Activated CD8-positive, alpha-beta T cell treated with anti-CD3 and anti-CD28 coated beads for 36 hours (primary cell): ENCODE measurements at regions of chr12 and their contacts with region 1.

Region 1: DNA sequence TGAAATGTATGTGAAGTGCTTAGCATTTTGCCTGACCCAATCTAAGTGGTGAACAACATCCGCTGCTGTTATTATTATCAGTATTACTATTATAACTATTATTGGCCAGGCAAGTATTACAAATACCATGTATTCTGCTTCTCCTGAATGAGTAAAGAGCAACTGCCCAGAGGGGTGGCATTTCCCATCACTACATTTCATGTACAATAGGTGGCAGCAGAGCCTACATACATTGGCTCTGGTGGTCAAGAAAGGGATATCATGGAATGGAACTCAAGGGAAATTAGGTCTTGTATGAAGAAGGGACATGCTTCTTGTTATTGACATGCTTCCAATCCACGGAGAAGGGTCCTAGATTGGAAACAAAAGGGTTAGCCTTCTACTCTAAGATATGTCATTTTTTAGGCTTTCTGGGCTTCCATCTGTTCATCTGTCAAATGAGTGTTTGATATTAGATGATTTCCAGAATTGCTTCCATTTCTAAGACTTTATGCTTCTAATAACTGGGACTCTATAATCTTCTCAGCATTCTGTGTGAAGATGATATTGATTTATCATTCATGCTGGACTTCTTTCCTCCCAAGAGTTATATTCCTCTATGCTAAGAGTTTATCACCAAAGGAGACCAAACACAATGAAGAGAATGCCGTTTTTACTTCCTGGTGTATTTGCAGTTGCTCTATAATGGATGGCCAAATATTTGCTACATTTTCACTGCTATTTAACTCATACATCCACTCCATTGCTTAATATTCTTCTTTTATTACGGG is 239.1 kb downstream of the SSPN start:
- DNase-seq: peak; percentile 26
- ATAC-seq: peak; percentile 61
- H3K4me3 Mint-ChIP-seq: no peak overlapping the region
- H3K27ac Mint-ChIP-seq: no peak overlapping the region
- H3K4me1 Mint-ChIP-seq: no peaks in the 10 kb centered on the region
- H3K27me3 Mint-ChIP-seq: no peaks in the 10 kb centered on the region
- CTCF ChIP-seq: peak; percentile 64

Region 2: GRCh38 chr12:26340649-26341048 is 93.8 kb before region 1 on chr12:
- CTCF ChIA-PET with region 1: no interaction called
- POLR2A ChIA-PET with region 1: no interaction called
- intact Hi-C with region 1: no loop called
- DNase-seq: no peak
- ATAC-seq: peak; percentile 37
- H3K4me3 Mint-ChIP-seq: no peak overlapping the region
- H3K27ac Mint-ChIP-seq: no peak overlapping the region
- H3K4me1 Mint-ChIP-seq: peaks cover 12% of the 10 kb centered on the region
- H3K27me3 Mint-ChIP-seq: no peaks in the 10 kb centered on the region
- CTCF ChIP-seq: no peak

Region 3: DNA sequence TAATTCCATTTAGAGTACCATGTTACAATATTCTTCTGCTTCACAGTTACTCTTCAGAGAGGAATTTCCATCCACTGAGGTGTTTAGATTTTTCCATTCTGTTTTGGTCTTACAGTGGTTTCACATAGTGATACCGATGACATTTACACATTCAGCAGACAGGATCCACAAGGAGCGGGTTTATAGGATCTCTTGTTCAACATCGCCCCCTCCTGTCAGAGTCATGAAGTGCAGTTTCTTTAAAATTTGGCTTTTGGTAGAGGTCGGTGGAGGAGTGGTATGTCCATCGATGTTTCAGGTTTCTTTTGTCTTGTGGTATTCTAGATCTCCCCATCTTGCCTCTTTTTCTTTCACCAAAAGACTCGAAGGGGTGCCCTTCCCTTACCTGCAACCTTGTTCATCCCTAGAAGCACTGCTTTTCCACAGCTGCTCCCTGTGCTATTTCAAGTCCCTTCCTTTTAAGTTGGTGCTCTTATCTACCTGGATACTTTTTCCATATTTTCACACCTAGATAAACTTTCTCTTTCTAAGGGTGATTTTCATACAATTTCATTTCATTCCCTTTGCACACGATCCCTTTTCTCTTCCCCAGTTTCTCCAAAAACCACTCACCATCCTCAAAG is 217.2 kb after region 1 on chr12:
- CTCF ChIA-PET with region 1: no interaction called
- POLR2A ChIA-PET with region 1: no interaction called
- intact Hi-C with region 1: loop called (anchors 5 kb)
- DNase-seq: peak; percentile 60
- ATAC-seq: peak; percentile 47
- H3K4me3 Mint-ChIP-seq: no peak overlapping the region
- H3K27ac Mint-ChIP-seq: no peak overlapping the region
- H3K4me1 Mint-ChIP-seq: peaks cover 3% of the 10 kb centered on the region
- H3K27me3 Mint-ChIP-seq: no peaks in the 10 kb centered on the region
- CTCF ChIP-seq: peak; percentile 75